ENCODE measurements at regions of chr11 and their contacts with region 1.

Region 1: DNA sequence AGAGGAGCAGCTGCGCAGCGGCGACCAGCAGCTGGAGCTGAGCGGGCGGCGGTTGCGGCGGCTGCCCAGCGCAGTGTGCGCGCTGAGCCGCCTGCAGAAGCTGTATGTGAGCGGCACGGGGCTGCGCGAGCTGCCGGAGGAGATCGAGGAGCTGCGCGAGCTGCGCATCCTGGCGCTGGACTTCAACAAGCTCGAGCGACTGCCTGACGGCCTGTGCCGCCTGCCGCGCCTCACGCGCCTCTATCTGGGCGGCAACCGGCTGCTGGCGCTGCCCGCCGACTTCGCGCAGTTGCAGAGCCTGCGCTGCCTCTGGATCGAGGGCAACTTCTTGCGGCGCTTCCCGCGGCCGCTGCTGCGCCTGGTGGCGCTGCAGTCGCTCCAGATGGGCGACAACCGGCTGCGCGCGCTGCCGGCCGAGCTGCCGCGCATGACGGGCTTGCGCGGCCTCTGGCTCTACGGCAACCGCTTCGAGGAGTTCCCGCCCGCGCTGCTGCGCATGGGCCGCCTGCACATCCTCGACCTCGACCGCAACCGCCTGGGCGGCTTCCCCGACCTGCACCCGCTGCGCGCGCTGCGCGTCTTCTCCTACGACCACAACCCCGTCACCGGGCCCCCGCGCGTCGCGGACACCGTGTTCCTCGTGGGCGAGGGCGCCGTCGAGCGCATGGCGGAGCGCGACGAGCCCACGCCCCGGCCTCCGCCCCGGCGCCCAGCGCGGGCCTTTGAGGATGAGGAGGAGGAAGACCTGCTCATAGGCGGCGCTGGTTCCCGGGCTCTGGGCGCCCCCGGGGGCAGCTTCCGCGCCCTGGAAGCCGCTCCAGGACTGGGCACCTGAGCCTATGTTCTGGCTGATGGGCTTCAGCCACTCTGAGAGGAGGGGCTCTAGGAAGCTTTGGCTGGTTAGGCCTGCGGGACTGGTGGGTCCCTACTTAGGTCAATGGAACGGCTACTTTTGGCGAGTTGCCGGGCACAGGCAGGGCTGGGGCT is 787 bp downstream of the LRRC10B start:
- DNase-seq: peak; percentile 38 to 76
- ATAC-seq: peak; percentile 71 to 87 (median 80)
- H3K4me3 ChIP-seq: peak overlapping the region in 9 of 10 donors; percentile 10 to 49 (median 40)
- H3K27ac ChIP-seq: peak overlapping the region; percentile 10 to 78 (median 56)
- H3K4me1 ChIP-seq: peaks cover 0 to 24% (median 17%) of the 10 kb centered on the region in 9 donors
- H3K27me3 ChIP-seq: peaks cover 13 to 78% (median 62%) of the 10 kb centered on the region in 7 donors
- CTCF ChIP-seq: peak; percentile 34 to 77 (median 58)

Region 2: GRCh38 chr11:61639816-61640443 is 130.6 kb after region 1 on chr11:
- intact Hi-C with region 1: loop called in 2 of 10 experiments (anchors 10 kb)
- DNase-seq: no peak
- ATAC-seq: no peak
- H3K4me3 ChIP-seq: no peak overlapping the region
- H3K27ac ChIP-seq: no peak overlapping the region
- H3K4me1 ChIP-seq: no peaks in the 10 kb centered on the region
- H3K27me3 ChIP-seq: peaks cover 0 to 10% (median 0%) of the 10 kb centered on the region in 7 donors
- CTCF ChIP-seq: no peak

Measured in heart right ventricle (tissue), 16 donors.